Common myeloid progenitor, CD34-positive (primary cell): ENCODE measurements at regions of chr9 and their contacts with region 1.

Region 1: GRCh38 chr9:137000177-137000883 is 4.0 kb upstream of the CLIC3 start:
- DNase-seq: peak in 2 of 3 donors; percentile 70 to 72
- H3K4me3 ChIP-seq: no peak overlapping the region
- H3K27ac ChIP-seq: no peak overlapping the region
- H3K4me1 ChIP-seq: peaks cover 0 to 46% (median 40%) of the 10 kb centered on the region in 4 experiments
- H3K27me3 ChIP-seq: peaks cover 0 to 17% (median 0%) of the 10 kb centered on the region in 5 experiments

Region 2: GRCh38 chr9:136944519-136945279 is 55.6 kb before region 1 on chr9 and contains the starts of genes C8G and FBXW5:
- CTCF ChIA-PET with region 1: interaction called, 18 read pairs
- POLR2A ChIA-PET with region 1: no interaction called
- DNase-seq: peak; percentile 89 to 95 (median 94)
- H3K4me3 ChIP-seq: peak within 1 kb of the TSS; percentile 64 to 91 (median 81)
- H3K27ac ChIP-seq: peak within 1 kb of the TSS; percentile 54 to 81
- H3K4me1 ChIP-seq: peaks cover 0 to 29% (median 25%) of the 10 kb centered on the region in 4 experiments
- H3K27me3 ChIP-seq: no peaks in the 10 kb centered on the region

Region 3: DNA sequence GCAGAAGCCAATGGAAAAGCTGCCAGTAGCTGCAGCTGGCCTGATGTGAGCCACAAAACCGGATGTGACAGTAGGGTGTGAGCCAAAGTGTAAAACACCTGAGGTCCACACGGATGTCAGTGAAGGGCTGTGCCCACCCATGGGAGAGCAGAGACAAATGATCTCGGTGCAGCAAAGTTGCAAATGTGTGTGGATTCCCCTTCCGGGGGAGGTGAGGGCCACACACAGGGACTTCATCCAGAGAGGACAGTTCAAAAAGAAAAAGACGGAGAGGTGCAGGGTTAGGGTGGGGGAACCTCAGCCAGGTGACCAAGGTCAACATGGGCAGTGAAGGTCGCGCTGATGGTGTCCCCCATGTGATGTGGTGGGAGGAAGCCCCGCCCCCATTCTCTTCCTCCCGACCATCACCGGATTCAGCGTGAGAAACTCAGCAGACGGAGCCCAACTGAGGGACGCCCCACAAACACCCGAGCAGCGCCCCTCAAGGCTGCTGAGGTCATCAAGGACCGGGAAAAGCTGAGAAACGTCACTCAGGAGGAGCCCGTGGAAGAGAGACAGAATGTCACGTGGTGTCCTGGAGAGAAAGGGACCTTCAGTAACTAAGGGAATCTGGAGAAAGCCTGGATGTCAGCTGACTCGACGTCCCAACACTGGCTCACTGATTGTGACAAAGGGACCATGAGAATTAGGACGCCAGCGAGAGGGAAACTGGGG is 34.4 kb before region 1 on chr9:
- CTCF ChIA-PET with region 1: no interaction called
- POLR2A ChIA-PET with region 1: no interaction called
- DNase-seq: peak in 1 of 3 donors; percentile 23
- H3K4me3 ChIP-seq: peak overlapping the region in 2 of 7 experiments; percentile 30 to 48
- H3K27ac ChIP-seq: no peak overlapping the region
- H3K4me1 ChIP-seq: peaks cover 0 to 8% (median 7%) of the 10 kb centered on the region in 4 experiments
- H3K27me3 ChIP-seq: peaks cover 0 to 2% (median 0%) of the 10 kb centered on the region in 5 experiments

Region 4: GRCh38 chr9:137067860-137068538 is 67.7 kb after region 1 on chr9:
- CTCF ChIA-PET with region 1: no interaction called
- POLR2A ChIA-PET with region 1: no interaction called
- DNase-seq: peak; percentile 93 to 96 (median 94)
- H3K4me3 ChIP-seq: no peak overlapping the region
- H3K27ac ChIP-seq: no peak overlapping the region
- H3K4me1 ChIP-seq: peaks cover 0 to 37% (median 30%) of the 10 kb centered on the region in 4 experiments
- H3K27me3 ChIP-seq: no peaks in the 10 kb centered on the region